Left ventricle myocardium inferior (tissue), 1 donor: ENCODE measurements at regions of chr19 and their contacts with region 1.

Region 1: DNA sequence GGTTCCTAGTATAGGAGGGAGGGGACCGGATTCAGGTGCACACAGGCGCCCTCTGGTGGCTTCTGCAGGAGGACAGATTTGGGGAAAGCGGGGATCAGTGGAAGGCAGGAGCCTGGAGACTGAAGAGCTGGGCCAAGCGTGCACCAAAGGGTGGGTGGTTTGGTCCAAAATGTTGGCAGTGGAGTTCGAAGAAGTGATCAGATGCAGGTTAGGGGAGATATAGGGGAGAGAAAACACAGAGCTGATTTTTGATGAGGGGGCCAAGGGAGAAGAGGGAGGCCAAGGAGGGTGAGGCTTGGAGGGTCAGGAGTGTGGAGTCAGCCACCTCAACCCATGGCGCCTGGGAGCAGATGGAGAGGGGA is 6.8 kb upstream of the CARM1 start:
- DNase-seq: peak; percentile 85
- H3K4me3 ChIP-seq: no peak overlapping the region
- H3K27ac ChIP-seq: peak overlapping the region; percentile 12
- H3K4me1 ChIP-seq: peaks cover 4% of the 10 kb centered on the region
- H3K27me3 ChIP-seq: no peaks in the 10 kb centered on the region
- CTCF ChIP-seq: peak; percentile 92

Region 2: DNA sequence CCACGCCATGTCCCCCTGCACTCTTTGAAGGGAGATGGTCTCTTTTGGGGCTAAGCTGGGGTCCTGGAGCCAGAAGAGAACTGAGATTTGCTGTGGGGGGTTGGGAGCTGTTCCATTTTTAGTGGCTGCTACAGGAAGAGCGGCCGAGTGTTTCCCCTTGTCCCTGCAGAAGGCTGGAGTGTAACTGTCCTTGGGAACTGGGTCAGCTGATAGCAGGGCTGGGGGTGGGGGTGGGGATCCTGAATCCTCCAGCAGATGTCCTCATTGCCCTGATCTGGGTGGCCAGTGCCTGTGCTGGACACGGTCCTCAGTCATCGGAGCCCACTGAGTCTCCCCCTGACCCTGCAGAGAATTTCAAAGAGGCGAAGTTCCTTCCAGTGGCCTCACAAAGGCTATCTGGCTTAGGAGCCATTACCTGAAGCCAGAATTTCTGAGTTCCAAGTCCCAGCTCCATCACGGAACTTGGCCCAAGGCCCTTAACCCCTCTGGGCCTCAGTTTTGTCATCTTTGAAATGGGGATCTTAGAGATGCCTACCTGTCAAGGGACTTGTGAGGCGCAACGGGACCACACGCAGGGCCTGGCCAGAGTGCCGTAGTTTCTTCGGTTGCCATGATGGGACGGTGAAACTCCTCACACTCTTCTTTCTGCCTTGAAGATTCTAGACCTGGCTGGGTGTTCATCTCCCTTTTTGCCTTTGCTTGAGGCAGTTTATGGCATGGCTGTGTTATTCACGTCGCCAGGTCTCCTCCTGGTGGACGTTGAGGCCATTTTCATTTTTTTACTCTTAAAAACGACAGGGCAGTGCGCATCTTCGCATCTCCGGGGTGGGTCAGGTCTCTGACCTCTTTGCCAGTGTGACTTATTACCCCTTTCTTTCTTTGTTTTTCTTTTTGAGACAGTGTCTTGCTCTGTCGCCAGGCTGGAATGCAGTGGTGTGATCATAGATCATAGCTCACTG is 94.7 kb before region 1 on chr19:
- intact Hi-C with region 1: loop called (anchors 10 kb)
- DNase-seq: peak; percentile 80
- H3K4me3 ChIP-seq: peak overlapping the region; percentile 53
- H3K27ac ChIP-seq: peak overlapping the region; percentile 95
- H3K4me1 ChIP-seq: peaks cover 61% of the 10 kb centered on the region
- H3K27me3 ChIP-seq: no peaks in the 10 kb centered on the region
- CTCF ChIP-seq: peak; percentile 47